GM18951 (cell line): ENCODE measurements at regions of chr6 and their contacts with region 1.

Region 1: DNA sequence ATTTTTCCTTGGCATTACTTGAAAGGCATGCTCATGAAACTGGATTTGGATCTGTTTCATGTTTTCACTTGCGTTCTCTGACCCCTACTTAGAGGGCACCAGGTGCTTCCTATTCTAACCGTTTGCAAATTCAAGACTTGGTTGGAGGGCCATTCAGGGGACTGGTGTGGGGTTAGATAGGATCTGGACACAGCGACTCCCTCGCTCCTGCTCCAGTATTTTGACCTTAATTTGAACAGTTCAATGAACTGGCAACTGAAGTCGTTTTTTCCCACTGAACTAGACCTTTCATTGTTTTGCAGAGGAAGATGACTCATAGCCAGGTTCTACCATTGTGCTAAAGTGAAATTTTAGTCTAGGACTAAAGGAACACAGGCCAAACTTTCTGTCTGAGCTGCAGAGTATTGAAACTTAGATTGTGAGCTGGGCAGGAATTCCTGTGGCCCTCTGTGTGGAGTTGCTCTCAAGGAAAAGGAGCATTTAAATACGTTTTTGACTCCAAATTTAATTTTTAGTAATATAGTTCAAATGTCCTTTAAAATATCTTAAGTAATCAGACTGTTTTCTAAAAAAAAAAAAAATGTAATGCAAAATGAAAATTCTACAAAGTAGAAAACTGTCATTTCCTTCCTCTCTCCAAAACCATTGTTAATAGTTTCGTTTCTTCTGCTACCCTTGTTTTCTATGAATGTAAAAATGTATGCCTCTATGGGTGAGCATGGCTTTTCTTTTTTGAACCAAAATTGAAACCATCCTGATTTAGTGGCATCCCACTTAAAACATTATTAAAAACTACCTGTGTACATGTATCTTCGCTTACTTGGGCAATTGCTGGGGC is 64.8 kb downstream of the UTRN start:
- POLR2A ChIP-seq: no peak

Region 2: DNA sequence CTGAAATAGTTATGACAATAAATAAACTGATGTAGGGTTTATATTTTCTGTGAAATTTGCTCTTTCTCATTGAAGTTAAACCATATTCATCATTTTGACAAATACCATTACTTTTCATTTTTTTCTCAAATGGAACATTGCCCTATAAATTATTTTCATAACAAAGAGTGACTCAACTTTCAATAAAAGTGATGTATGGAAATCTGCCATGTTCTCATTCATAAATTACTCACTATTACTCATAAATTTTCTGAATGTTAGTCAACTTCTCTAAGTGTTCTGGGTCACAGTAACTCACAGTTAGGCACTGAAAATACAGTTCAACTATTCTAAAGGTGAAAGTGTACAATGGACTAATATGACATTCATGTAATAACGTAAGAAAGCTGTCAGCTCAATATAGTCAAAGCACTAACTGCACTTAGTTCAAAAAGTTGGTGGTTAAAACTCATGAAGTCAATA is 218.6 kb before region 1 on chr6:
- in situ Hi-C with region 1: no loop called
- POLR2A ChIP-seq: no peak

Region 3: DNA sequence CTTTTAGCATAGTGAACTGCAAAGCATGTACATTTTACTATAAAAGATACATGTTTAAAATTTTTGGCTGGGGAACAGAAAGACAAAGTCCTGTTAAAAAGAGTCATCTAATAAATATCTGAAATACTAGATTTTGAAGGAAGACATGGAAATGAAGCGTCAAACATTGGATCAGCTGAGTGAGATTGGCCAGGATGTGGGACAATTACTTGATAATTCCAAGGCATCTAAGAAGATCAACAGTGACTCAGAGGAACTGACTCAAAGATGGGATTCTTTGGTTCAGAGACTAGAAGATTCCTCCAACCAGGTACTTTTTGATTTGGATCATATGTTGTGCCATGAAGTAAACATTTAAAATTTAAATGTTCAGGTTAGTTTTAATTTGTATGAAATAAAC is 97.6 kb after region 1 on chr6:
- in situ Hi-C with region 1: loop called (anchors 5 kb)
- POLR2A ChIP-seq: no peak